Dendritic cell treated with granulocyte-macrophage colony-stimulating factor and Interleukin-4, amounts not matched to agents 40 ng/mL and 50 ng/mL, for 4 days (primary cell): ENCODE measurements at regions of chr18 and their contacts with region 1.

Region 1: GRCh38 chr18:72544092-72544886 is at the start of gene CBLN2:
- H3K4me3 Mint-ChIP-seq: peak within 1 kb of the TSS; percentile 4
- H3K27ac Mint-ChIP-seq: no peak within 1 kb of the TSS
- H3K4me1 Mint-ChIP-seq: peaks cover 14% of the 10 kb centered on the region
- H3K27me3 Mint-ChIP-seq: peaks cover 52% of the 10 kb centered on the region

Region 2: DNA sequence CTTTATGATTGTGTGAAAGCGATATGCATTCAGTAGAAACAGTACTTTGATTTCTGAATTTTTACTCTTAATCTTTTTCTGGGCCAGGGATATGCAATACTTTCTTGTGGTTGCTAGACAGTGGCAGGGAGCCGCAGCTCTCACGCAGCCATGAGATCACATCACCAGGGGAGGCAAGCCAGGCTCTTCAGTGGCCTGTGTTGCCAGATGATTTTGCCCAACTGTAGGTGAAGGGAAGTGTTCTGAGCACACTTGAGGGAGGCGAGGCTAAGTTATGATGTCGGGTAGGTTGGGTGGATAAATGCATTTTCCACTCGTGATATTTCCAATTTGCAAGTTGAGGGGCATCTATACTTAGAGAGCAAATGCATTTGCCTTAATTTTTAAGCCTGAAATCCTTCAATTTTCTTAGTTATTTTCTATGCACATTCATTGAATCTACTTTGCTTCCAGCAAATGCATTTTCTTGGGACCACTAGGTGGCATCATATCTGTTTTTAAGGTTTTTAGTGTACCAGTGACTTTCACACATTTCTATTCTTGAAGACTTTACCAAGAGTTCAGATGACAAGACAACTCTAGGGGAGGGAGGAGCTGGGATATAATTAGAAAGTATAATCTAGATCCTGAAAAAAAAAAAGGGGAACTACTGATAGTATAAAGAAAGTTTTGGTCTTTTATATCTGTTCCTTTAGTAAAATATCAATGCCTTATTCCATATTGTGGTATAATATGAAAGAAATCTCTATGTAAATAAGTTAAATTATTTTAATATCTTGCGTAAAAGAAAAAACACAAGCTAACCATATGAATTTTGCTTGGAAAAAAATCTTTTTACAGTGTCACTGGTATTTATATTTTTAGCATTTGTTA is 1612.1 kb before region 1 on chr18:
- intact Hi-C with region 1: loop called (anchors 5 kb)
- H3K4me3 Mint-ChIP-seq: no peak overlapping the region
- H3K27ac Mint-ChIP-seq: no peak overlapping the region
- H3K4me1 Mint-ChIP-seq: no peaks in the 10 kb centered on the region
- H3K27me3 Mint-ChIP-seq: no peaks in the 10 kb centered on the region

Region 3: DNA sequence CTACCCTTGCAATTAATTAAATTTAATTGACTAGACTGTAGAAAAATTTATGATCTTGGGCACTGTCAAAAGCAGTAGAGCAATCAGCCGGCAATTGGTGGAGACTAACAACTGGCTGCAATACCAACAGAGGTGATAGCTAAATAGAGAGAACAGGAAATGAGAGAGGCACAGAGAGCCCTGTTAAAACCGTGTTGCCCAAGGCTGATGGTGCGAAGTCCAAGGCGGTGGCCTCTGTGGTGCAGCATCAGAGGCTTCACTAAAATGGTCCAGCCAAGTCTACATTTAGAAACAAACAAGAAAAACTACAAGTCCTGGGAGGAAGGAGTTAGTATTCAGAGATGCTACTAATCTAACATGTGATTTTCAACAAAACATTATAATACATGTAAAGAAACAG is 207.9 kb after region 1 on chr18:
- intact Hi-C with region 1: no loop called
- H3K4me3 Mint-ChIP-seq: no peak overlapping the region
- H3K27ac Mint-ChIP-seq: no peak overlapping the region
- H3K4me1 Mint-ChIP-seq: no peaks in the 10 kb centered on the region
- H3K27me3 Mint-ChIP-seq: no peaks in the 10 kb centered on the region